ENCODE measurements at regions of chr3 and their contacts with region 1.

Region 1: GRCh38 chr3:48635222-48636021 is at the start of gene SLC26A6:
- DNase-seq: peak; percentile 90 to 98
- H3K4me3 ChIP-seq: peak within 1 kb of the TSS; percentile 75 to 84 (median 84)
- H3K27ac ChIP-seq: peak within 1 kb of the TSS; percentile 58; the same call in 1 of the 2 replicates
- H3K4me1 ChIP-seq: peaks cover 3 to 6% (median 5%) of the 10 kb centered on the region in 4 experiments
- H3K27me3 ChIP-seq: no peaks in the 10 kb centered on the region; a peak in 1 of 7 replicates
- CTCF ChIP-seq: peak in 2 of 3 experiments; percentile 76 to 86; a peak in 3 of 4 replicates
- EP300 ChIP-seq: no peak
- POLR2A ChIP-seq: peak in 1 of 2 experiments; percentile 81; a peak in 1 of 3 replicates
- RAD21 ChIP-seq: peak; percentile 55 to 67
- total RNA-seq, gene SLC26A6: 50.4 and 51.2 TPM in 2 replicates

Region 2: GRCh38 chr3:48465531-48466378 is 169.7 kb before region 1 on chr3:
- CTCF ChIA-PET with region 1: no interaction called
- POLR2A ChIA-PET with region 1: interaction called, 10 read pairs
- DNase-seq: peak; percentile 87 to 94
- H3K4me3 ChIP-seq: no peak overlapping the region; a peak in 1 of 8 replicates
- H3K27ac ChIP-seq: peak overlapping the region; percentile 88
- H3K4me1 ChIP-seq: peaks cover 0 to 25% (median 14%) of the 10 kb centered on the region in 4 experiments; a peak in 5 of 7 replicates
- H3K27me3 ChIP-seq: no peaks in the 10 kb centered on the region
- CTCF ChIP-seq: peak in 2 of 3 experiments; percentile 87 to 92; a peak in 3 of 4 replicates
- EP300 ChIP-seq: peak in 1 of 2 experiments; percentile 72; a peak in 1 of 3 replicates
- POLR2A ChIP-seq: no peak
- RAD21 ChIP-seq: peak; percentile 93

Region 3: GRCh38 chr3:48543271-48543866 is 92.1 kb before region 1 on chr3:
- CTCF ChIA-PET with region 1: no interaction called
- POLR2A ChIA-PET with region 1: no interaction called
- DNase-seq: no peak
- H3K4me3 ChIP-seq: no peak overlapping the region
- H3K27ac ChIP-seq: no peak overlapping the region
- H3K4me1 ChIP-seq: no peaks in the 10 kb centered on the region; a peak in 2 of 7 replicates
- H3K27me3 ChIP-seq: no peaks in the 10 kb centered on the region
- CTCF ChIP-seq: no peak
- EP300 ChIP-seq: no peak
- POLR2A ChIP-seq: no peak
- RAD21 ChIP-seq: no peak

Region 4: DNA sequence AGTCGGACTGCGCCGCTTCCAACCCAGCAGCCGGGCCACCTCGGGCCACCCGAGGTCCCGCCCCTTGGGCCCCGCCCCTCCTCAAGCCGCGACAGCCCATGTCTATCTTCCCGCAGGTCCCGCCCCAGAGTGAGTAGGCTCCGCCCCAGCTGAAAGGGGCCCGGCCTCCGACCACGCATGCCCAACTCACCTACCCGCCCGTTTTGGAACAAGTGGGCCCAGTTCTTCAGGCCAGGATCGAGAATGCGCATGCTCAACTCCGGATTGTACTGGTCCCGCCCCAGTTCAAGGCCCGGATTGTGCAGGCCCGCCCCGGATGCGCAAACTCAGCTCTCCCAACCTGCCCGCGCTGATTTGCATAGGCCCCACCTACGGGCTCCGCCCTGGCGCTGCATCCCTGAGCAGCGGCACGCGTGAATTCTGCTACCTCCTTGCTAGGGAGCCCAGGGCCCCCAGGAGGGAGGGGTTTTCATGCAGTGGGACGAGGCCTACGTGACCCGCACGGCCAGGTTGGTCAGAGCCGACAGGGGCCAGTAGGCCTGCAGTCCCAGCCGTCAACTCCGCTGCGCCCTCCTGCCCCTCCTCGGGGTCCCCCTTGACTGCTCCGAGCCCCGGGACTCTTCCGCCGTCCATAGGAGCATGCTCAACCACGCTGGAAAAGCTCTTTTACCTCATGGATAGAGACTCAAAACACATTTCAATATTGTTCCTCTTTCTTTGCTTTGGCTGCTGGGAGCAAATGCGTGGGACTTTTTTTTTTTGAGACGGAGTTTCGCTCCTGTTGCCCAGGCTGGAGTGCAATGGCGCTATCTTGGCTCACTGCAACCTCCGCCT is 78.4 kb before region 1 on chr3 and contains the start of gene PFKFB4:
- CTCF ChIA-PET with region 1: interaction called, 45 read pairs
- POLR2A ChIA-PET with region 1: interaction called, 6 read pairs
- DNase-seq: peak; percentile 99 to 100
- H3K4me3 ChIP-seq: peak within 1 kb of the TSS; percentile 67 to 90 (median 73)
- H3K27ac ChIP-seq: peak within 1 kb of the TSS; percentile 67
- H3K4me1 ChIP-seq: peaks cover 4 to 33% (median 22%) of the 10 kb centered on the region in 4 experiments
- H3K27me3 ChIP-seq: no peaks in the 10 kb centered on the region
- CTCF ChIP-seq: peak in 1 of 3 experiments; percentile 36; a peak in 1 of 4 replicates
- EP300 ChIP-seq: no peak
- POLR2A ChIP-seq: peak in 1 of 2 experiments; percentile 82; a peak in 2 of 3 replicates
- RAD21 ChIP-seq: no peak
- total RNA-seq, gene PFKFB4: 10.7 and 11.3 TPM in 2 replicates

Region 5: DNA sequence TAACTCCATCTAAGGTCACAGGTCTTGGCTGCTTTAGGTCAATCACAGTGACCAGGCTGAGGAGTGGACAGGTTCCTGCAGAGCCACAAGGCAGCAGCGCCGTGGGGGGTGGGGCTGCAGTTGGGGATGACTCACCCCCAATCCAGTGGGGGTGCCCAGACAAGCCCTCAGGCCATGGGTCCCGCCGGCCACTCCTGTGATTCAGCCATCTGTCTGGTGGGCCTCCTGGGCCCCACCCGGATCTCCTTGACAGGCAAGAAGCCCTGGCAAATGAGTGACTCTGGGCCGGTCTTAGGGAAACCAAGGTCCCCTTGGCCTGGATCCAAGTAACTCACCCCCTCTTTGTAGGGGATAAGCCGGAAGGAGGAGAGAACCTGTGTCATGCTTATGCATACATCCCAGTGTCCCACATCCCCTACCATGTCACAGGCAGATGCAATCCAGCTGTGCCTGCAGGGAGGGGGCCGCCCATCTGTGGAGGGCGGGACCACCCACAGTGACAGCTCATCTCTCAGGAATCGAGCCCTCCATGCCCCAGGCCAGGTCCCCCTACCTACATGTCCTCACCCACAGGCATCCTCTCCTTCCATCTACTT is 39.8 kb before region 1 on chr3:
- CTCF ChIA-PET with region 1: interaction called, 5 read pairs
- POLR2A ChIA-PET with region 1: interaction called, 22 read pairs
- DNase-seq: peak; percentile 59 to 80
- H3K4me3 ChIP-seq: peak overlapping the region in 2 of 4 experiments; percentile 15 to 57; a peak in 3 of 8 replicates
- H3K27ac ChIP-seq: no peak overlapping the region
- H3K4me1 ChIP-seq: peaks cover 3 to 18% (median 15%) of the 10 kb centered on the region in 4 experiments; a peak in 6 of 7 replicates
- H3K27me3 ChIP-seq: peaks cover 0 to 6% (median 0%) of the 10 kb centered on the region in 4 experiments; a peak in 4 of 7 replicates
- CTCF ChIP-seq: no peak
- EP300 ChIP-seq: no peak
- POLR2A ChIP-seq: no peak
- RAD21 ChIP-seq: no peak

Region 6: GRCh38 chr3:48609088-48610005 is 26.1 kb before region 1 on chr3 and contains the start of gene UQCRC1:
- CTCF ChIA-PET with region 1: interaction called, 23 read pairs
- POLR2A ChIA-PET with region 1: interaction called, 33 read pairs
- DNase-seq: peak; percentile 88 to 93
- H3K4me3 ChIP-seq: peak within 1 kb of the TSS; percentile 79 to 99 (median 91)
- H3K27ac ChIP-seq: peak within 1 kb of the TSS; percentile 85
- H3K4me1 ChIP-seq: peaks cover 0 to 2% (median under 1%) of the 10 kb centered on the region in 4 experiments; a peak in 2 of 7 replicates
- H3K27me3 ChIP-seq: no peaks in the 10 kb centered on the region
- CTCF ChIP-seq: peak; percentile 64 to 74 (median 71)
- EP300 ChIP-seq: no peak
- POLR2A ChIP-seq: peak; percentile 85 to 87
- RAD21 ChIP-seq: peak in 1 of 2 experiments; percentile 38; a peak in 3 of 4 replicates
- total RNA-seq, gene UQCRC1: 310 TPM in 2 replicates

Region 7: GRCh38 chr3:48623851-48624547 is 11.4 kb before region 1 on chr3:
- CTCF ChIA-PET with region 1: interaction called, 49 read pairs
- POLR2A ChIA-PET with region 1: interaction called, 71 read pairs
- DNase-seq: no peak
- H3K4me3 ChIP-seq: no peak overlapping the region
- H3K27ac ChIP-seq: peak overlapping the region; percentile 35; the same call in 1 of the 2 replicates
- H3K4me1 ChIP-seq: peaks cover 0 to 6% (median 3%) of the 10 kb centered on the region in 4 experiments; a peak in 3 of 7 replicates
- H3K27me3 ChIP-seq: no peaks in the 10 kb centered on the region
- CTCF ChIP-seq: no peak
- EP300 ChIP-seq: no peak
- POLR2A ChIP-seq: peak in 1 of 2 experiments; percentile 9; a peak in 1 of 3 replicates
- RAD21 ChIP-seq: no peak

Region 8: DNA sequence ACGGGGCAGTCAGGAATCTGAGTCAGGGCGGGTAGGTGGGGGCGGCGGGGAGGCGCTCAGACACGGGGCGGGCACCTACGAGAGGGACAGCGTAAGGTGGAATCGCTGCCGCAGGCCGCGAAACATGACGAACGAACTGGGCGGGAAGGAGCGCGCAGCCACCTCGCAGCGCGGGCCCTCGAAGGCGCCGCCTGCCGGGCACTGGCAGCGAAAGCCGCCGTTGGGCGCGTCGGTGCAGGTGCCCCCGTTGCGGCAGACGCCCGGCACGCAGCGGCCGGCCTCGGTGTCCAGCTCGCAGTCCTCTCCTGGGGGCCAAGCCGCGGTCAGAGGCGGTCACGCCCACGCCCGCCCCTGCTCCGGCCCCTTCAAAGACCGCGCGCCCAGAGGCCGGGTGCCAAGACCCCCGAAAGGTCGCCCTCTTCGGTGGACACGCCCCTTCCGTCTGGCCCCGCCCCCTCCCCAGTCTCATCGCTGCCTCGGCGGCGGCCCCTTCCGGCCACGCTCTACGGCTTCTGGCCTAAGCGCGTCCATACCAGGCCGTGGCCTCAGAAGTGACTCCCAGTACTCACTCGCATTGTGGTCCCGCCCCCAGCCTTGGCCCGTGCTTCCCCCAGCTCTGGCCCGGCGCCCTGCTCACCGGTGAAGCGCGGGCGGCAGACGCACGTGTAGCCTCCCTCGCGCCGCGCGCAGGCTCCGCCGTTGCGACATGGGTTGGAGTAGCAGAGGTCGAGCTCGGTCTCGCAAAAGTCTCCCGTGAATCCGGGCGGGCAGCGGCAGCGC is 20.8 kb after region 1 on chr3:
- CTCF ChIA-PET with region 1: interaction called, 27 read pairs
- POLR2A ChIA-PET with region 1: interaction called, 111 read pairs
- DNase-seq: peak; percentile 75 to 97
- H3K4me3 ChIP-seq: peak overlapping the region; percentile 33 to 61 (median 40)
- H3K27ac ChIP-seq: peak overlapping the region; percentile 71; the same call in 1 of the 2 replicates
- H3K4me1 ChIP-seq: peaks cover 0 to 17% (median 15%) of the 10 kb centered on the region in 4 experiments; a peak in 6 of 7 replicates
- H3K27me3 ChIP-seq: peaks cover 0 to 5% (median 4%) of the 10 kb centered on the region in 4 experiments; a peak in 3 of 7 replicates
- CTCF ChIP-seq: peak in 2 of 3 experiments; percentile 67 to 74; a peak in 3 of 4 replicates
- EP300 ChIP-seq: no peak
- POLR2A ChIP-seq: peak in 1 of 2 experiments; percentile 76; a peak in 2 of 3 replicates
- RAD21 ChIP-seq: peak; percentile 26 to 48; a peak in 3 of 4 replicates

Region 9: GRCh38 chr3:48678056-48678455 is 42.6 kb after region 1 on chr3:
- CTCF ChIA-PET with region 1: no interaction called
- POLR2A ChIA-PET with region 1: no interaction called
- DNase-seq: no peak
- H3K4me3 ChIP-seq: no peak overlapping the region
- H3K27ac ChIP-seq: no peak overlapping the region
- H3K4me1 ChIP-seq: no peaks in the 10 kb centered on the region
- H3K27me3 ChIP-seq: no peaks in the 10 kb centered on the region
- CTCF ChIP-seq: no peak
- EP300 ChIP-seq: no peak
- POLR2A ChIP-seq: no peak
- RAD21 ChIP-seq: no peak